ENCODE measurements at regions of chr22 and their contacts with region 1.

Region 1: DNA sequence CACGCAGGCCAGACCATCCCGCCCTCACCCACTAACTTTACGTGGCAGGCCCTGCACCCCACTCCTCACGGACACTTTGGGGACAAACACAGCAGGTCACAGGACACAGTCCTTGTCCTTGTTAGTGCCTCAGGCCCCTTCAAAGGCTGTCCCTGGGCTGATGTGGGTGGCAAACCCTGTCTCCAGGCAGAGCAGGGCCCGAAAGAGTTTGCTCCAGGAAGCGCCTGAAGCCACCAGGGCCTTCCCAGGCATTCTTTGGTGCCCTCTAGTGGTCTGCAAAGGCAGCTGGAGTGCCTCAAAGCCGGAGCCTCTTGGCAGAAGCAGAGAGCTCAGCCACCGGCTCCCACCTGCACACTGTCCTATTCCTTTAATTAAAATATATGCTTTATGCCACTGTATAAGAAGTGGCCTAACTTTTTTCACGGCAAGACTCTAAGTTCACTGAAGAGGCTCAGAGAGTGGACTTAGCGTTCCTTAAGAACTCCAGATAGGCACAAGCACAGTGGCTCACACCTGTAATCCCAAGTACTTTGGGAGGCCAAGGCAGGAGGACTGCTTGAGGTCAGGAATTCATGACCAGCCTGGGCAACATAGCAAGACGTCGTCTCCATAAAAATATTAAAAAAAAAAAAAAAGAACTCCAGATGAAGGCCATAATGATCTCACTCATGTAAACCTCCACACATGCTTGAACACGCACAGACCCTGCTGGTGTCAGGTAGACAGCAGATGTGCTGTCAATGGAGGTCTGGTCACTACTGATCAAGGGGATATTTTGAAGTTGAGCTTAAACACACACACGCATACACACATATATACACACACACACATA is 11.1 kb downstream of the TXN2 start:
- DNase-seq: peak; percentile 88
- H3K4me3 ChIP-seq: no peak overlapping the region
- H3K27ac ChIP-seq: no peak overlapping the region
- H3K4me1 ChIP-seq: peaks cover 3% of the 10 kb centered on the region
- CTCF ChIP-seq: peak; percentile 98

Region 2: DNA sequence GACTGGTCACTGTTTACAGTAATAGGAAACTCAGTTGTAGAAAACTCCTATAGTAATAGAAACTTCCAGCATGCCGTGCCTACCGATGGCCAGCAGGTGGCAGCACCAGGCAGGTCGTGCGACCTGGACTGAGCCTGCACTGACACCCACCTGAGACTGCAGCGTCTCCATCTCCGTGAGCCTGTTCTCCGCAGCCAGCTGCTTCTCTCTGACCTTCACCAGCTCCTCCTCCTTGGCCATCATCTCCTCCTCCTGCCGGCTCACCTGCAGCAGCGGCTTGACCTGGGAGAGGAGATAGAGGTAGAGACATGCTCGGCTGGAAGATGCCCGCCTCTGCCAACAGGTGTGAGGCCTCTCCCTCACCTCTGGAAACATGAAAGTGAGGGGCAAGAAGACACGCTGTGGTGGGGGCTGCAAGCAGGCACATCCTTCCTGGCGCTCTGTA is 169.0 kb before region 1 on chr22:
- CTCF ChIA-PET with region 1: interaction called, 6 read pairs
- POLR2A ChIA-PET with region 1: no interaction called
- intact Hi-C with region 1: loop called (anchors 1 kb)
- DNase-seq: peak; percentile 82
- H3K4me3 ChIP-seq: no peak overlapping the region
- H3K27ac ChIP-seq: no peak overlapping the region
- H3K4me1 ChIP-seq: no peaks in the 10 kb centered on the region
- CTCF ChIP-seq: peak; percentile 98